ENCODE measurements at regions of chr7 and their contacts with region 1.

Region 1: DNA sequence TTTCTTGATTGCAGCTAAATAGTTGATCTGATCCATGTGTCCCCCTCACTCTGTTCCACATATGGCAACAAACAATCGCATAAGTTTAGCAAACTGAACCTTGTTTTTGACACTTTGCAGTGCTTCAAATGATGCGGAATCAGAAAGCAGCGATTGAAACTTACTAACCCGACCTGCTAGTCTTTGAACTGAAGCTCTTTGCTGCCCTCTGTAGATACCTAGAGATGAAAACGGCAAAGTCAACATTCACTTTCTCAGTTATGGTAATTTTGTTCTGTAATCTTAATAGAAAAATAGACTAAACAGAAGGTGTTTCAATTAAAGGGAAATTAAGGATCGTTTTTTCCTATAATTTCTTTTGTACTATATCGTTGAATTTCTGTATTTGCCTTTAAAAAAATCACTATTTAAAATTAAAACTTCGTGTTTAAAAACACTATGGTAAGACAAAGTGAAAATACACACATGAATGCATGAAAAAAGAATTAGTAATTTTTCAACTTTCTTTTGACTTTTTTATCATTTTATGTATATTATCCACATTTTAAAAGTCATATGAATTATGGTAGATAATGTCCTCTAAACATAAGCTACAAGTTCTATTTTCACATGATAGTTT is 276.5 kb downstream of the MAGI2 start:
- DNase-seq: peak in 2 of 4 donors; percentile 49 to 61
- ATAC-seq: peak; percentile 88
- H3K4me3 ChIP-seq: no peak overlapping the region
- H3K27ac ChIP-seq: no peak overlapping the region
- H3K4me1 ChIP-seq: no peaks in the 10 kb centered on the region
- H3K27me3 ChIP-seq: no peaks in the 10 kb centered on the region
- CTCF ChIP-seq: peak in 1 of 2 donors; percentile 44

Region 2: DNA sequence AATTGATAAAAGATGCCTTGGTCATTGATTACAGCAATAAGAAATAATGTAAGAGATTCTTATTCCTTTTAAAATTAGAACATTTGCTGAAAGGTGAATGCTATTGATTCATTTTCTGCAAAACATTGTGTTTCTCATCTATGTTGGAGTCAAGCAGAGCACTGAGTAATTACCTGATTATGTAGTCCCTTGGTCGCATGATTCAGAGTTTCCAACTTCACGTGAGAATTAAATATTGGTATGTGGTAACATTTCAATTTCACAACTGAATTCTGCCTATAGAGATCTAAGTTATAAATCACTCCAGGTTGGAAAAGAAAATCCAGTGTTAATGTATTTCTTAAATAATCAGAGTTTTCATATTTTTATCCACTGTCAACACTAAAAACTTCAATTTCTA is 677.0 kb before region 1 on chr7:
- intact Hi-C with region 1: loop called in 1 of 2 experiments (anchors 10 kb)
- DNase-seq: no peak
- ATAC-seq: no peak
- H3K4me3 ChIP-seq: no peak overlapping the region
- H3K27ac ChIP-seq: no peak overlapping the region
- H3K4me1 ChIP-seq: no peaks in the 10 kb centered on the region
- H3K27me3 ChIP-seq: no peaks in the 10 kb centered on the region
- CTCF ChIP-seq: no peak

Region 3: GRCh38 chr7:78576236-78576635 is 600.7 kb before region 1 on chr7:
- intact Hi-C with region 1: no loop called
- DNase-seq: no peak
- ATAC-seq: no peak
- H3K4me3 ChIP-seq: no peak overlapping the region
- H3K27ac ChIP-seq: no peak overlapping the region
- H3K4me1 ChIP-seq: no peaks in the 10 kb centered on the region
- H3K27me3 ChIP-seq: no peaks in the 10 kb centered on the region
- CTCF ChIP-seq: no peak

Measured in left lung (tissue), 14 donors.